ENCODE measurements at regions of chr3 and their contacts with region 1.

Region 1: GRCh38 chr3:167882067-167882667 is 146.6 kb downstream of the SERPINI1 start:
- DNase-seq: no peak
- ATAC-seq: no peak
- H3K4me3 ChIP-seq: peak overlapping the region in 2 of 4 donors; percentile 10 to 11
- H3K27ac ChIP-seq: no peak overlapping the region
- H3K4me1 ChIP-seq: peaks cover 0 to under 1% of the 10 kb centered on the region in 2 donors
- H3K27me3 ChIP-seq: no peaks in the 10 kb centered on the region
- CTCF ChIP-seq: peak; percentile 40 to 73 (median 50)
- POLR2A ChIP-seq: no peak

Region 2: DNA sequence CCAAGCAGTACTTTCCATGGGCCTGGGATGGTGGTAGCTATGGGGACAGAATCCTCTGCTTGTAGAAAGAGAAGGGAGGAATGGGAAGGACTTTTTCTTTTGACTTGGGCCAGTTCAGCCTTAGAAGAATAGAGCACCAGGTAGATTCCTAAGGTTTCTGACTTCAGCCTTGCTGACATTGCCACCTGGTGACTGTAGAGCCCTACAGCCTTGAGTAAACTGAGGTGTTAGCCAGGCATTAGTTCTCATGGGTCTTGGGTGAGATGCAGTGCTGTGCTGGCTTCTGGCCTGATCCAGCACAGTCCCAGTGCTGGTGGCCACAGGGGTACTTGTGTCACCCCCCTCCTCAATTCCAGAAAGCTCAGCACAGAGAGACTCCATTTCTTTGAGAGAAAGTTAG is 673.1 kb before region 1 on chr3:
- in situ Hi-C with region 1: no loop called
- intact Hi-C with region 1: no loop called
- DNase-seq: no peak
- ATAC-seq: no peak
- H3K4me3 ChIP-seq: no peak overlapping the region
- H3K27ac ChIP-seq: no peak overlapping the region
- H3K4me1 ChIP-seq: no peaks in the 10 kb centered on the region
- H3K27me3 ChIP-seq: no peaks in the 10 kb centered on the region
- CTCF ChIP-seq: no peak
- POLR2A ChIP-seq: no peak

Region 3: DNA sequence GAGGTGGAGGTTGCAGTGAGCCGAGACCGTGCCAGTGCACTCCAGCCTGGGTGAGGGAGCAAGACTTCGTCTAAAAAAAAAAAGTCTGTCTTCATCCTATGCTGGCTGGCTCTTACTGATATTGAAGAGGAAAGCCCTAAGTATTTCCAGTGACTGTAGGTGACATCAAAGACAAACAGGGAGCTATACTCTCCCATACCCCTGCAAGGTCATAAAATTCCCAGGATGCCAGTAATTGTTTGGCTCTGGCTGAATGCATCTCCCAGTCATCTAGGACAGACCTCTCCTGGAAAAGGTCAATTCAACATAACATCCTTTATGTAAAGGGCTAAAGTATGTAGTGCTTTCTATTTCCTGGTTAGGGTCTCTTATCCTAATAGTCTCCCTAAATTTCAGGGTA is 510.0 kb before region 1 on chr3:
- in situ Hi-C with region 1: loop called (anchors 10 to 25 kb)
- intact Hi-C with region 1: no loop called
- DNase-seq: no peak
- ATAC-seq: no peak
- H3K4me3 ChIP-seq: no peak overlapping the region
- H3K27ac ChIP-seq: no peak overlapping the region
- H3K4me1 ChIP-seq: no peaks in the 10 kb centered on the region
- H3K27me3 ChIP-seq: no peaks in the 10 kb centered on the region
- CTCF ChIP-seq: no peak
- POLR2A ChIP-seq: no peak

Region 4: DNA sequence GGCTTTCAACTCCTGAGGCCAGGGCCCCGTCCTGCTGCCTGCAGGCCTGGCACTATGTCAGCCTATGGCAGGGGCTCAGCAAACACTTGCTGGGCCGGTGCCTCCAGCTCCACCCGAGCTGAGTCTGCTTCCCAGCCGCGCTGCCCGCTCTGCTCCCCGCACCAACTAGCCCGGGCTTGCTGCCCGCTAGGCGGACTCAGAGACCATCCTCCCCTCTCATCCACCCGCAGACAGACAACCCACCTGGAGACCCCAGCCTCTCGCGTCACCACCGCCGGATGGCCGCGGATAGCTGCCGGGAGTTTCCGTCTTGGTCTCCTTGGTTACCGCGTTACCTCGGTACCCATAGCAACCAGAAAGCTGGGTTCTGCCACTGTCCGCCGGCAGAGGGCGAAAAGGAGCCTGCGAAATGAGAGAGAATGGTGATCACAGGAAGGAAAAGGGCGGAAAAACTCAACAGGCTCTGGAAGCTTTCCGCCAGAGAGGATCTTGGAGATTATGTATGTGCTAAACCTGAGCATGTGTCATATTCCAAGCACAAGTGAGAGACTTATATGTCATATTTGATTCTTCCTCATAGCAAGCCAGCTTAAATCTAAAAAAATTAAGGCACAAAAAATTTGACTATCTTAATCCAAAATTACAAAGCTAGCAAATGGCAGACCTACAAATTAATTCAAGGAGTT is 502.0 kb before region 1 on chr3 and contains the start of gene ZBBX:
- in situ Hi-C with region 1: loop called (anchors 10 to 25 kb)
- intact Hi-C with region 1: loop called (anchors 1 kb)
- DNase-seq: peak; percentile 17 to 66
- ATAC-seq: peak; percentile 75 to 97
- H3K4me3 ChIP-seq: peak within 1 kb of the TSS; percentile 38 to 56 (median 46)
- H3K27ac ChIP-seq: no peak within 1 kb of the TSS
- H3K4me1 ChIP-seq: peaks cover 7 to 9% of the 10 kb centered on the region in 2 donors
- H3K27me3 ChIP-seq: no peaks in the 10 kb centered on the region
- CTCF ChIP-seq: peak; percentile 55 to 80 (median 77)
- POLR2A ChIP-seq: no peak
- total RNA-seq, gene ZBBX: not detected

Region 5: GRCh38 chr3:167409611-167410010 is 472.6 kb before region 1 on chr3:
- in situ Hi-C with region 1: no loop called
- intact Hi-C with region 1: no loop called
- DNase-seq: no peak
- ATAC-seq: no peak
- H3K4me3 ChIP-seq: no peak overlapping the region
- H3K27ac ChIP-seq: no peak overlapping the region
- H3K4me1 ChIP-seq: no peaks in the 10 kb centered on the region
- H3K27me3 ChIP-seq: no peaks in the 10 kb centered on the region
- CTCF ChIP-seq: no peak
- POLR2A ChIP-seq: no peak

Region 6: DNA sequence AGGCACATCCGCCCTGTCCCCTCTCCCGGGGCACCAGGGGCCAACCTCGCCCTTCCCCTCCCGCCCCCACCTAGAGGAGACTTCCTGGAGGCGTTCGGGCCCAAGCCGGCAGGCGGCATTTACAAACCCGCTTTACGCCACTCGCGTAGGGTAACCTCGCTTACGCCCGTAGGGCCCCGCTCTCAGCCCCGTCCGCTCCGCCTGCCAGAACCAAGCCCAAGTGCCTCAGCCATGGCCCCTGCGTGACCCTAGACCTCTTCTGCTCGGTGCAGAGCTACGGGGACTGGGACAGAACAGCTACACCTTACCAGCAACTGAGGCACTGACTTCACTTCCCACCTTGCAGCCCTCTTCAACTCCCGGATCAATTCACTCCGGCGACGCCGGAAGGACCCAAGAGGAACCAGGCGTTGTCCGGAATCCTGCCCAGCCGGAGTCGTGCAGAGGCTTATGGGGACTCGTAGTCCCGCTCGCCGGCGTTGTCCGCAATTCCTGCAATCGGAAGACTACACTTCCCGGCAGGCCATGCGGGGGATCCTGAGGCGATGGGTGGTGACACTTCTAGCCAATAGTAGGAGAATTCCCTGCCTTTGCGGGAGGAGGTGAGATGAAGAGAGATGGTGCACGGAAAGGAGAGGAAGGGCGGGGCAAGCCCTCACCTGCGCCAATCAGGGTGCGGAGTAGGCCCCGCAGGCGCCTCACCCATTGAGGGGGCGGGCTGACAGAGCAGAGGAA is 147.5 kb before region 1 on chr3 and contains the start of gene PDCD10:
- in situ Hi-C with region 1: no loop called
- intact Hi-C with region 1: loop called (anchors 5 kb)
- DNase-seq: peak; percentile 98
- ATAC-seq: peak; percentile 94 to 96
- H3K4me3 ChIP-seq: peak within 1 kb of the TSS; percentile 63 to 91 (median 83)
- H3K27ac ChIP-seq: peak within 1 kb of the TSS; percentile 90 to 94 (median 92)
- H3K4me1 ChIP-seq: peaks cover 27 to 33% of the 10 kb centered on the region in 2 donors
- H3K27me3 ChIP-seq: no peaks in the 10 kb centered on the region
- CTCF ChIP-seq: peak in 1 of 5 experiments; percentile 6
- POLR2A ChIP-seq: peak; percentile 52 to 57
- total RNA-seq, gene PDCD10: 25.7 to 32.6 (median 31.6) TPM

Region 7: DNA sequence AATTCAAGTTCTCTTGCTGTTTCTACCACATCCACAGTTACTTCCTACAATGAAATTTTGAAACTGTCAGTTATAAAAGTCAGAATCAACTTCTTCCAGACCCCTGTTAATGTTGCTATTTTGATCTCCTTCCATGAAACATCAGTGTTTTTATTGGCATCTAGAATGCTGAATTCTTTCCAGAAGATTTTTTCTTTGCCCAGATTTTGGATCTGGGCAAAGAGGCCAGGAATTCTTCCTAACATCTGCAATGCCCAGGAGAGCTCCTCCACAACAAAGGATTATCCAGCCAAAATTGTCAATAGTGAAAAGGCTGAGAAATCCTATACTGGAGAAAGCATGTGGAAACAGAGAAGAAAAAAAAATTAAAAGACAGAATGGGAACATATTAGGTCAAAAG is 71.1 kb before region 1 on chr3:
- in situ Hi-C with region 1: no loop called
- intact Hi-C with region 1: no loop called
- DNase-seq: no peak
- ATAC-seq: no peak
- H3K4me3 ChIP-seq: no peak overlapping the region
- H3K27ac ChIP-seq: no peak overlapping the region
- H3K4me1 ChIP-seq: peaks cover 33 to 35% of the 10 kb centered on the region in 2 donors
- H3K27me3 ChIP-seq: no peaks in the 10 kb centered on the region
- CTCF ChIP-seq: no peak
- POLR2A ChIP-seq: no peak

Region 8: GRCh38 chr3:167837466-167837865 is 44.7 kb before region 1 on chr3:
- in situ Hi-C with region 1: no loop called
- intact Hi-C with region 1: loop called (anchors 2 kb)
- DNase-seq: no peak
- ATAC-seq: no peak
- H3K4me3 ChIP-seq: no peak overlapping the region
- H3K27ac ChIP-seq: no peak overlapping the region
- H3K4me1 ChIP-seq: no peaks in the 10 kb centered on the region
- H3K27me3 ChIP-seq: no peaks in the 10 kb centered on the region
- CTCF ChIP-seq: peak in 2 of 5 experiments; percentile 26 to 30
- POLR2A ChIP-seq: no peak